CD4-positive, alpha-beta T cell (primary cell): ENCODE measurements at regions of chr1 and their contacts with region 1.

Region 1: GRCh38 chr1:165914136-165914798 is 86.9 kb downstream of the UCK2 start:
- DNase-seq: peak; percentile 39 to 85 (median 56)
- ATAC-seq: peak; percentile 96
- H3K4me3 ChIP-seq: no peak overlapping the region
- H3K4me3 Mint-ChIP-seq: no peak overlapping the region
- H3K27ac ChIP-seq: no peak overlapping the region
- H3K27ac Mint-ChIP-seq: no peak overlapping the region
- H3K4me1 ChIP-seq: no peaks in the 10 kb centered on the region
- H3K4me1 Mint-ChIP-seq: peaks cover 4% of the 10 kb centered on the region
- H3K27me3 ChIP-seq: no peaks in the 10 kb centered on the region
- H3K27me3 Mint-ChIP-seq: peaks cover 3% of the 10 kb centered on the region
- CTCF ChIP-seq: peak; percentile 93

Region 2: GRCh38 chr1:165597883-165598675 is 316.2 kb before region 1 on chr1:
- CTCF ChIA-PET with region 1: interaction called, 9 read pairs
- POLR2A ChIA-PET with region 1: no interaction called
- intact Hi-C with region 1: loop called (anchors 1 kb)
- DNase-seq: peak; percentile 65 to 96 (median 81)
- ATAC-seq: peak; percentile 92
- H3K4me3 ChIP-seq: peak overlapping the region; percentile 58
- H3K4me3 Mint-ChIP-seq: peak overlapping the region; percentile 88
- H3K27ac ChIP-seq: no peak overlapping the region
- H3K27ac Mint-ChIP-seq: peak overlapping the region; percentile 38
- H3K4me1 ChIP-seq: peaks cover 19% of the 10 kb centered on the region
- H3K4me1 Mint-ChIP-seq: peaks cover 33% of the 10 kb centered on the region
- H3K27me3 ChIP-seq: peaks cover 18 to 24% of the 10 kb centered on the region in 2 experiments
- H3K27me3 Mint-ChIP-seq: peaks cover 49% of the 10 kb centered on the region
- CTCF ChIP-seq: no peak

Region 3: GRCh38 chr1:165717918-165718515 is 196.2 kb before region 1 on chr1:
- CTCF ChIA-PET with region 1: no interaction called
- POLR2A ChIA-PET with region 1: no interaction called
- intact Hi-C with region 1: loop called in 1 of 2 experiments (anchors 1 kb)
- DNase-seq: peak in 8 of 14 experiments; percentile 3 to 59 (median 20)
- ATAC-seq: peak; percentile 60
- H3K4me3 ChIP-seq: no peak overlapping the region
- H3K4me3 Mint-ChIP-seq: no peak overlapping the region
- H3K27ac ChIP-seq: no peak overlapping the region
- H3K27ac Mint-ChIP-seq: no peak overlapping the region
- H3K4me1 ChIP-seq: no peaks in the 10 kb centered on the region
- H3K4me1 Mint-ChIP-seq: no peaks in the 10 kb centered on the region
- H3K27me3 ChIP-seq: no peaks in the 10 kb centered on the region
- H3K27me3 Mint-ChIP-seq: no peaks in the 10 kb centered on the region
- CTCF ChIP-seq: peak; percentile 32

Region 4: DNA sequence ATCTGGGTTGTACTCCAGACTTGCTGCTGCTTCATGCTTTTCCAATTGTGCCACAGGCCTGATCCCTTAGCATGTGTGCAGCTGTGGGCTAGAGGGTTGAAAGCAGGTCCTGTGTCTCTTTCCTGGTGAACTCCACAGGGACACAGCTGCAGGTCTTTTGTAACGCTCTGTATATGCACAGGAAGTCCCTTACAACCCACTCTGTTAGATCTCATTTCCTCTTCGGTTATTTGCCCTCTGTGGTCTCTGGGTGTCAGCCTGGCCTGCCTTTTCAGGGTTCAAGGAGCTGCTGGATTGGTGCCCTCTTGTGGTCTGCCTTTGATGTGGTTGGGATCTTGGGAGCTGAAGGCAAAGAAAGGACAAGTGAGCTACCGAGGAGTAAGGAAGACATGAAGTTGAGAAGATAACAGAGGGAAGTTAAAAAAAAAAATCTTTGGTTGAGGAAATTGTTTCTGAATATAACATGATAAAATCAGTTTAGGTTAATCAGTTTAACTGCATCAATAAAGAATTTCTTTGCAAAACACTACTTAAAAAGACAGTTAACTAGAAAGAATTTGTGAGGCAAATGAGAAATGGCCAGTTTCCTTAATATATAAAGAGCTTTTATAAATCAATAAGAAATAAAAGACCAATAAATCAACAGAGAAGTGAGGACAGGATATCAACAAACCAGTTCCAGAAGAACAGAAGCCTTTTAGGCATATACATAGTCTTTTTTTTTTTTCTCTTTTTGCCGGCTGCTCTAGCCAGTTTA is 42.8 kb before region 1 on chr1:
- CTCF ChIA-PET with region 1: interaction called, 3 read pairs
- POLR2A ChIA-PET with region 1: no interaction called
- intact Hi-C with region 1: loop called in 1 of 2 experiments (anchors 2 kb)
- DNase-seq: peak in 13 of 14 experiments; percentile 13 to 78 (median 33)
- ATAC-seq: peak; percentile 81
- H3K4me3 ChIP-seq: no peak overlapping the region
- H3K4me3 Mint-ChIP-seq: peak overlapping the region; percentile 52
- H3K27ac ChIP-seq: peak overlapping the region in 1 of 2 donors; percentile 5
- H3K27ac Mint-ChIP-seq: peak overlapping the region; percentile 25
- H3K4me1 ChIP-seq: peaks cover 29% of the 10 kb centered on the region
- H3K4me1 Mint-ChIP-seq: peaks cover 56% of the 10 kb centered on the region
- H3K27me3 ChIP-seq: no peaks in the 10 kb centered on the region
- H3K27me3 Mint-ChIP-seq: no peaks in the 10 kb centered on the region
- CTCF ChIP-seq: peak; percentile 35

Region 5: GRCh38 chr1:165898837-165899236 is 15.4 kb before region 1 on chr1:
- CTCF ChIA-PET with region 1: no interaction called
- POLR2A ChIA-PET with region 1: no interaction called
- intact Hi-C with region 1: no loop called
- DNase-seq: no peak
- ATAC-seq: no peak
- H3K4me3 ChIP-seq: no peak overlapping the region
- H3K4me3 Mint-ChIP-seq: no peak overlapping the region
- H3K27ac ChIP-seq: no peak overlapping the region
- H3K27ac Mint-ChIP-seq: no peak overlapping the region
- H3K4me1 ChIP-seq: peaks cover 3% of the 10 kb centered on the region
- H3K4me1 Mint-ChIP-seq: no peaks in the 10 kb centered on the region
- H3K27me3 ChIP-seq: no peaks in the 10 kb centered on the region
- H3K27me3 Mint-ChIP-seq: no peaks in the 10 kb centered on the region
- CTCF ChIP-seq: no peak

Region 6: DNA sequence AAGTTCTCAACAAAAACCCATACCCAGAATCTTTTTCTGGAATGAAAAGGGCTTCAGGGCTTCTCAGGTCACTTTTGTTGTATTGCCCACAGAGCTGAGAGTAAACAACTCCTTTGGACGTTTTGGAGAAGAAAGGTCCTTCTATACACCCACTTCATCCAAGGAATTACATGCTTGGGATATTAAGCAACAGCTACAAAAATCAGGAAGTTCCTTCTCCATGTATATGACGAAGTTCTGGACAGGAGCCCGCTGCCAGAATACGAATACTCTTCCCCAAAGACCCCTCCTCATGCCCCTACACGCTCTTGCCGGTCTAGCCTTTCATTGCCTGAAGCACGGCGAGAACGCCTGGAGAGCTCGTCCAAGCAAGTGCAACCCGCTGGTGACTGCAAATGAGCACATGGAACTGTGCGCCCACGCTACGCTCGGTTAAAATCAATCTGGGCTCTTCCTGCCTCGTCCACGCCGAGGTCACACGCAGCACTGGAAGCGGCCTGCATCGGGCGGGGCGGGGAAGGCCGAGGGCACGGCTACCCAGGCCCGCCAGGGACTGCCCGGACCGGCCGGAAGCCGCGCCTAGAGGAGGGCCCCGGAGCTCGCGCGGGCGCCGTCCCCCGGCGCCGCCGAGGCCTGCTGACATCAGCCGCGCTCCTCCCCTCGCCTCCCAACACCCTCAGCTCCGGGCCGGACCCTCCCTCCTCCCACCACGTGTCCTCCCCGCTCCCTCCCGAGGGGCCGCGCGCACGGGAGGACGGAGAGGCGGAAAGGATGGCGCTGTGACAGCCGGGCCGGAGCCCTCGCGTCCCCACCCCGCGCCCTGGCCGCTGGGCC is 924.7 kb after region 1 on chr1 and contains the start of gene POGK:
- CTCF ChIA-PET with region 1: no interaction called
- POLR2A ChIA-PET with region 1: no interaction called
- intact Hi-C with region 1: loop called in 1 of 2 experiments (anchors 5 kb)
- DNase-seq: peak; percentile 61 to 94 (median 78)
- ATAC-seq: peak; percentile 87
- H3K4me3 ChIP-seq: peak within 1 kb of the TSS; percentile 67
- H3K4me3 Mint-ChIP-seq: peak within 1 kb of the TSS; percentile 91
- H3K27ac ChIP-seq: peak within 1 kb of the TSS; percentile 56 to 79
- H3K27ac Mint-ChIP-seq: peak within 1 kb of the TSS; percentile 87
- H3K4me1 ChIP-seq: peaks cover 46% of the 10 kb centered on the region
- H3K4me1 Mint-ChIP-seq: peaks cover 53% of the 10 kb centered on the region
- H3K27me3 ChIP-seq: no peaks in the 10 kb centered on the region
- H3K27me3 Mint-ChIP-seq: no peaks in the 10 kb centered on the region
- CTCF ChIP-seq: no peak
- total RNA-seq, gene POGK: 16.1 to 17.6 TPM